ENCODE measurements at regions of chr2 and their contacts with region 1.

Region 1: GRCh38 chr2:66813976-66814375 is 379.1 kb downstream of the MEIS1 start:
- DNase-seq: no peak
- ATAC-seq: no peak
- H3K4me3 ChIP-seq: no peak overlapping the region
- H3K4me3 Mint-ChIP-seq: no peak overlapping the region
- H3K27ac ChIP-seq: no peak overlapping the region
- H3K27ac Mint-ChIP-seq: no peak overlapping the region
- H3K4me1 ChIP-seq: no peaks in the 10 kb centered on the region
- H3K4me1 Mint-ChIP-seq: no peaks in the 10 kb centered on the region
- H3K27me3 ChIP-seq: no peaks in the 10 kb centered on the region
- H3K27me3 Mint-ChIP-seq: no peaks in the 10 kb centered on the region

Region 2: DNA sequence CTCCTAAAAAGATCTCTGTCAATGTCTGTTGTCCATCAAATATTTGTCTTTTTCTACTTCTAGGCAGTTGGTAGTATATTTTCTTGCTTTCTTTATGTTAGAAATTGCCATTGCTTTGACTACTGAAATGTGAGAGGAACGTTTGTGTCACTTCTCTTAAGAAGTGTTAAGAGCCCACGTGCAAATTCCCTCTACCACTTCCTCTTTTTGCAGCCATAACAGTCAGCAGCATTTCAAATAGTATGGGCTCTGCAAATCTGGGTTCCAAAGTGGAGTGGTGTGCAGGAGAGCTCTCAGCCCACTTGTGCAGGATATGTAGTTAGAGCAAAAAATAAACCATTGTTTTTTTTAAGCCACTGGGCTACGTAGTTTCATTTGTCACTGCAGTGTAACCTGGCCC is 65.0 kb before region 1 on chr2:
- CTCF ChIA-PET with region 1: no interaction called
- POLR2A ChIA-PET with region 1: no interaction called
- DNase-seq: no peak
- ATAC-seq: no peak
- H3K4me3 ChIP-seq: no peak overlapping the region
- H3K4me3 Mint-ChIP-seq: no peak overlapping the region
- H3K27ac ChIP-seq: no peak overlapping the region
- H3K27ac Mint-ChIP-seq: no peak overlapping the region
- H3K4me1 ChIP-seq: no peaks in the 10 kb centered on the region
- H3K4me1 Mint-ChIP-seq: no peaks in the 10 kb centered on the region
- H3K27me3 ChIP-seq: no peaks in the 10 kb centered on the region
- H3K27me3 Mint-ChIP-seq: peaks cover 0 to under 1% of the 10 kb centered on the region in 2 donors

Region 3: DNA sequence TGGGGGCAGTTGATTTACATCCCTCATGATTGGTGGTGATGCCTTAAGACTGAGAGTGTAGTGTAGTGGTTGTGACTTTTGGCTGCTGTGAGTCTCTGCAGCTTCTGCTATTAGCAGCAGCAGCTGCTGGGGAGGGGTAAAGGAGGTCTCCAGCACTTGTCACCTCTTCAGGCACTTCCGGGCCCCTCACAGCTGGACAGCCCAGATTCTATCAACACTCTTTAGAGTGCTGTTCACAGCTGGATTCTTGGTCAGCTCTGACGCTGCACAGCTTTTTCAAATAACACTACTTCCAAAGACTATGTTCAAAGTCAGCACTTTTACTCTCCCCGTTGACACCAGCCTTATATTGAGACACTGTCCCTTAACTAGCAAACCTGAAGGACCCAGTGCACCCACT is 16.9 kb after region 1 on chr2:
- CTCF ChIA-PET with region 1: no interaction called
- POLR2A ChIA-PET with region 1: interaction called in 1 of 2 experiments, 10 read pairs
- DNase-seq: no peak
- ATAC-seq: no peak
- H3K4me3 ChIP-seq: no peak overlapping the region
- H3K4me3 Mint-ChIP-seq: no peak overlapping the region
- H3K27ac ChIP-seq: no peak overlapping the region
- H3K27ac Mint-ChIP-seq: no peak overlapping the region
- H3K4me1 ChIP-seq: no peaks in the 10 kb centered on the region
- H3K4me1 Mint-ChIP-seq: no peaks in the 10 kb centered on the region
- H3K27me3 ChIP-seq: no peaks in the 10 kb centered on the region
- H3K27me3 Mint-ChIP-seq: no peaks in the 10 kb centered on the region